ENCODE measurements at regions of chr2 and their contacts with region 1.

Region 1: GRCh38 chr2:12931186-12931844 is 214.6 kb downstream of the TRIB2 start:
- DNase-seq: peak; percentile 56
- H3K4me3 Mint-ChIP-seq: no peak overlapping the region
- H3K27ac Mint-ChIP-seq: no peak overlapping the region
- H3K4me1 Mint-ChIP-seq: peaks cover 19% of the 10 kb centered on the region
- H3K27me3 Mint-ChIP-seq: no peaks in the 10 kb centered on the region
- CTCF ChIP-seq: peak; percentile 87

Region 2: DNA sequence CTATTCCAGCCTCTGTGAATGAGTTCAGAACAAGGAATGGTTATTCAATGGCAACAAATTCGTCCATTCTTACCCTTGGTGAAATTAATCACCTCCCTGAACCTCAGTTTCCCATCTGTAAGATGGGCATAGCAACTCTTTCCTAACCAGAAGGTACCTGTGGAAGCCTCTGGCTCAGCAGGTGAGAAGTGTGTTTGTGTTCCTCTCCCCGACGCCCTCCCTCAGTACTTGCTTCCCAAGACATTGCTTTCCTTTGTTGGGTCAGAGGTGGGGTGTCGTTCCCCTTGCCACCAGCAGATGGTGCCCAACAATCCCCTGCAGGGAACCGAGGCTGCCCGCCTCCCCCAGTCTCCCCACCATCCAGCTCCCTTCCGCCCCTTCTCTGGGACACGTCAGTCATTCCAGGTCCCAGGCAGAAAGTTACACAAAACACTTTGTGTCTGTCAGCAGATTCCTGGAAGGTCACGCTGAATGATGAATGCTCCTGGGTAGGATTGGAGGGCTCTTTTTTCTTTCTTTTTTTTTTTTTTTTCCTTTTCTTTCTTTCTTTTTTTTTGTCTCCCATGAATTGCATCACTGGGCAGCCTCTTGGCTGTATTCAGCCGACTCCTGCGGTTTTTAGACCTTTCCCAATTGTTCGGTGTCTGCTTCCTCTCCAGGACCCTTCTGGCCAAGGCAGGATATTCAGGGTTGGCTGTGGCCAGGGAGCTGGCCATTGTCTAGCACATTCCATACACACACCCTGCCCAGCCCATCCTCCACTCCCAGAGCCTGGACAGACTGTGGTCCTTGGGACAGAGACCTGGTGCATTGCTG is 1067.6 kb before region 1 on chr2:
- CTCF ChIA-PET with region 1: interaction called, 8 read pairs
- POLR2A ChIA-PET with region 1: no interaction called
- intact Hi-C with region 1: loop called (anchors 1 kb)
- DNase-seq: peak; percentile 96
- H3K4me3 Mint-ChIP-seq: peak overlapping the region; percentile 9
- H3K27ac Mint-ChIP-seq: peak overlapping the region; percentile 80
- H3K4me1 Mint-ChIP-seq: peaks cover 21% of the 10 kb centered on the region
- H3K27me3 Mint-ChIP-seq: no peaks in the 10 kb centered on the region
- CTCF ChIP-seq: peak; percentile 92

Region 3: GRCh38 chr2:12804091-12804856 is 127.0 kb before region 1 on chr2:
- CTCF ChIA-PET with region 1: interaction called, 6 read pairs
- POLR2A ChIA-PET with region 1: no interaction called
- intact Hi-C with region 1: loop called (anchors 1 kb)
- DNase-seq: no peak
- H3K4me3 Mint-ChIP-seq: no peak overlapping the region
- H3K27ac Mint-ChIP-seq: no peak overlapping the region
- H3K4me1 Mint-ChIP-seq: peaks cover 7% of the 10 kb centered on the region
- H3K27me3 Mint-ChIP-seq: no peaks in the 10 kb centered on the region
- CTCF ChIP-seq: no peak

Region 4: DNA sequence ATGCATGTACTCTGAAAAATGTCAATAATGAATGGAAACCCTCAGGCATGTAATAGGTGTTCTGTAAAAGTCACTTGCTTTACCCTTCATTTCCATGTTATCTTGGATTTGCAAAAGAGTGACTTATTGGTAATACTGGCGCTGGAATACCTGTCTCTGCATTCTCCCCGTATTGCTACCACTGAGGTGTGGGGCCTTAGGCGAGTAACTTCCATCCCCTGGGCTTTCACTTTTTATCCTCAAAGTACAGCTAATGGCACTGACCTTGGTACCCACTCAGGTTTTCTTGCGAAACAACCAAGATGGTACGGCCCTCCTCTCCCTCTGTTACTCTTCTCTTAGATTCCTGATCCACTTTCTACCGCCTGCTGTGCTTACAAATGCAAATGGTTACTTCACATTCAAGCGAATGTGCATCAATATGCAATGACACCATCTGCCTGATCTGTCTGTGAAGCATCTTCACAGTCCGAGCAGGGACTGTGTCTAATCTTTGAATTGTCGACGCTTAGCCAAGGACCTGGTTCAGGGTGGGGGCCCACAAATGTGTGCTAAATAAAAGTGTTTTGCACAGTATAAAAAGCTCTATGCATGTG is 102.4 kb before region 1 on chr2:
- CTCF ChIA-PET with region 1: no interaction called
- POLR2A ChIA-PET with region 1: no interaction called
- intact Hi-C with region 1: no loop called
- DNase-seq: no peak
- H3K4me3 Mint-ChIP-seq: no peak overlapping the region
- H3K27ac Mint-ChIP-seq: no peak overlapping the region
- H3K4me1 Mint-ChIP-seq: no peaks in the 10 kb centered on the region
- H3K27me3 Mint-ChIP-seq: no peaks in the 10 kb centered on the region
- CTCF ChIP-seq: no peak

Region 5: GRCh38 chr2:12884713-12885282 is 46.5 kb before region 1 on chr2:
- CTCF ChIA-PET with region 1: interaction called, 15 read pairs
- POLR2A ChIA-PET with region 1: no interaction called
- intact Hi-C with region 1: no loop called
- DNase-seq: peak; percentile 77
- H3K4me3 Mint-ChIP-seq: no peak overlapping the region
- H3K27ac Mint-ChIP-seq: no peak overlapping the region
- H3K4me1 Mint-ChIP-seq: peaks cover 7% of the 10 kb centered on the region
- H3K27me3 Mint-ChIP-seq: no peaks in the 10 kb centered on the region
- CTCF ChIP-seq: no peak

Region 6: GRCh38 chr2:12948961-12949353 is 17.6 kb after region 1 on chr2:
- CTCF ChIA-PET with region 1: interaction called, 23 read pairs
- POLR2A ChIA-PET with region 1: no interaction called
- intact Hi-C with region 1: no loop called
- DNase-seq: no peak
- H3K4me3 Mint-ChIP-seq: no peak overlapping the region
- H3K27ac Mint-ChIP-seq: no peak overlapping the region
- H3K4me1 Mint-ChIP-seq: peaks cover 6% of the 10 kb centered on the region
- H3K27me3 Mint-ChIP-seq: no peaks in the 10 kb centered on the region
- CTCF ChIP-seq: no peak